CD8-positive, alpha-beta T cell (primary cell): ENCODE measurements at regions of chr10 and their contacts with region 1.

Region 1: DNA sequence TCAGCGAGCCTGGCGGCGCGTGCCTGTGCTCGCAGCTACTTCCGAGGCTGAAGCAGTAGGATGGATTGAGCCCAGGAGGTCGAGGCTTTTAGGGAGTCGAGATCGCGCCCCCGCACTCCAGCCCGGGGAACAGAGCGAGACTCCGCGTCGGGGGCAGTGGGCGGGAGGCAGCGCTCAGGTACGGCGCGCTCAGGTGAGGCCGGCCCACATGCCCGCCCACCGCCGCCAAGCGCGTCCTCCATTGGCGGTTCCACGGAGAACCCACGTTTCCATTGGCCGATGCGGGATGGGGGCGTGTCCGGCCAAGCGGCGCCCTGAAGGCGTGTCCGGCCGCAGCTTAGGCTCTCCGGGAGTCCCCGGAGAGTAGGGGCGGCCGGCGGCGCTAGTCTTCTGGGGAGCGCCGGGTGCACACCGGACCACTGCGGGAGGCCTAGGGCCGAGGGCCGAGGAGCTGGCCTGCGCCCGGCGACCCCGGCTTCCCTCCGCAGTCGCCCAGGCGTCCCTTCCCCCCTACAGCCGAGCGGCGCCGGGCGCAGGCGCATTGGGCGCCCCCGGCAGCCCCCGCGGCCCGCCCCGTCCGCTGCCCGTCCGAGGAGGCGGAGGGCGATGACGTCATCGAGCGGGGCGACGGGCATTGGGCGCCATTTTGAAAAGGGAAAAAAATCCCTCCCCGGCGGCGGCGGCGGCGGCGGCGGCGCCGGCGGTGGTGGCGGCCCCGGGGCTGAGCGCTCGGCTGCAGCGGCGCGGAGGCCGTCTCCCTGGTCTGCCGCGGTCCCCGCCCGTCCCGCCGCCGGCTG is at the start of gene PPP2R2D:
- DNase-seq: peak; percentile 91 to 97 (median 95)
- ATAC-seq: peak; percentile 83
- H3K4me3 ChIP-seq: peak within 1 kb of the TSS; percentile 65 to 76
- H3K4me3 Mint-ChIP-seq: peak within 1 kb of the TSS; percentile 87
- H3K27ac ChIP-seq: peak within 1 kb of the TSS; percentile 73 to 79
- H3K27ac Mint-ChIP-seq: peak within 1 kb of the TSS; percentile 88
- H3K4me1 ChIP-seq: peaks cover 56% of the 10 kb centered on the region
- H3K4me1 Mint-ChIP-seq: peaks cover 52% of the 10 kb centered on the region
- H3K27me3 ChIP-seq: no peaks in the 10 kb centered on the region
- H3K27me3 Mint-ChIP-seq: no peaks in the 10 kb centered on the region
- CTCF ChIP-seq: no peak
- total RNA-seq, gene PPP2R2D: 28.4 to 28.5 TPM

Region 2: GRCh38 chr10:131943021-131943814 is 42.7 kb after region 1 on chr10:
- CTCF ChIA-PET with region 1: interaction called, 3 read pairs
- POLR2A ChIA-PET with region 1: no interaction called
- intact Hi-C with region 1: loop called in 1 of 2 experiments (anchors 5 kb)
- DNase-seq: peak in 4 of 9 experiments; percentile 25 to 43 (median 36)
- ATAC-seq: peak; percentile 59
- H3K4me3 ChIP-seq: no peak overlapping the region
- H3K4me3 Mint-ChIP-seq: no peak overlapping the region
- H3K27ac ChIP-seq: no peak overlapping the region
- H3K27ac Mint-ChIP-seq: peak overlapping the region; percentile 62
- H3K4me1 ChIP-seq: no peaks in the 10 kb centered on the region
- H3K4me1 Mint-ChIP-seq: peaks cover 3% of the 10 kb centered on the region
- H3K27me3 ChIP-seq: no peaks in the 10 kb centered on the region
- H3K27me3 Mint-ChIP-seq: no peaks in the 10 kb centered on the region
- CTCF ChIP-seq: peak; percentile 23

Region 3: DNA sequence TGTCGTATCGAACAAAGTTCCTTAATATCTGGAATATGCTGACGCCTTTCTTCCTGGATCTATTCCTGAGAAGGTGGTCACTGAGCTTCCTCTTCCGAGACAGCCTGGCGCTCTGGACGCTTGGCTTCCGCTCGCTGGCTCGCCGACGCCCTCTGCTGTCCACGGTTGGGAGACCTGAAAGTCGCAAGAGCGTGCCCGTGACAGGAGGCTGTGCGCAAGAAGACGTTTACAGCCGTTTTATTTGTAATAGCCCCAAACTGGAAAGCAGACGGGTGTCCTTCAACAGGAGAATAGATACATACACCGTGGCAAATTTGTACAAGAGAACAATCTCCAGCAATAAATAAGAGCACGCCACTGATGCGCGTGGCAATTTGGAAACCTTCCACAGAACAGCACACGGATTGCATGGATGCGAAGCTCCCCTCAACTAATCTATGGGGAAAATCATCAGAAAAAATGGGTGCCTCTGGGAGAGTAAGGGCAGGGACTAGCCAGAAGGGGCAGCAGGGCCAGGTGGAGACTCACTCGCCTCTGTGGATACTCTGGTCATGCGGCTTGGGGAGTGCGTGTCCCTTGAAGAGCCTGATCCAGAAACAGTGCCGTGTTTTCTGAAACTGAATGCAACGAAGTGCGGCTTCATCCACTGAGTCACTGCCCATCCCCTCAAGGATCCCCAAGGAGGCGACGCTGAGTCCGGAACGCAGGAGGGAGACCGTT is 122.7 kb after region 1 on chr10:
- CTCF ChIA-PET with region 1: interaction called, 27 read pairs
- POLR2A ChIA-PET with region 1: interaction called, 3 read pairs
- intact Hi-C with region 1: no loop called
- DNase-seq: peak; percentile 54 to 88 (median 77)
- ATAC-seq: peak; percentile 94
- H3K4me3 ChIP-seq: no peak overlapping the region
- H3K4me3 Mint-ChIP-seq: peak overlapping the region; percentile 8
- H3K27ac ChIP-seq: no peak overlapping the region
- H3K27ac Mint-ChIP-seq: no peak overlapping the region
- H3K4me1 ChIP-seq: peaks cover 6% of the 10 kb centered on the region
- H3K4me1 Mint-ChIP-seq: peaks cover 7% of the 10 kb centered on the region
- H3K27me3 ChIP-seq: peaks cover 0 to 6% of the 10 kb centered on the region in 2 experiments
- H3K27me3 Mint-ChIP-seq: peaks cover 30% of the 10 kb centered on the region
- CTCF ChIP-seq: peak; percentile 91

Region 4: DNA sequence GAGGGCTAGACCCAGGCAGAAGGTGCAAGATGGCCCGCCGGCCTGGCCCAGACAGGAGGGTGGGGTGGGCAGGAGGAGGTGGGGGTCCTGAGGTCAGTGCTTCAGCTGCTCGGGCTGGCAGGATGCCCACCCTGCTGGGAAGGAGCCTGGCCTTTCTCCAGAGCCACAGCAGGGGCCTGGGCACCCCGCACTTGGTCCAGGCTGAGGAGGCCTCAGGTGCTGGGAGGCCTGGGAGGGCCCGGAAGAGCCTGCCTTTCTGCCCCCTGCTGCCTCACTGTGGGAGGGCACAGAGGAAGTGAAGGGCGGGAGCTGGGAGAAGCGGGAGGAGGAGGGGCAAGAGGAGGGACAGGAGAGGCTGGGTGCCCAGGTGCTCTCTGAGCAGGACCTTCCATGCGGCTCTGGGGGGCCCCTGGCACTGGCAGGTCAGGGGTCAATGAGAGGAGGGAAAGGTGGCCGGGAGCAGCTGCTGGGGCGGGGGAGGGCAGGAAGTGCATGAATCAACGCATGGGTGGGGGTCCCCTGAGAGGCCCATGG is 546.2 kb after region 1 on chr10:
- CTCF ChIA-PET with region 1: no interaction called
- POLR2A ChIA-PET with region 1: no interaction called
- intact Hi-C with region 1: loop called (anchors 5 kb)
- DNase-seq: peak; percentile 31 to 89 (median 73)
- ATAC-seq: peak; percentile 36
- H3K4me3 ChIP-seq: peak overlapping the region; percentile 43 to 53
- H3K4me3 Mint-ChIP-seq: peak overlapping the region; percentile 71
- H3K27ac ChIP-seq: peak overlapping the region; percentile 87 to 99
- H3K27ac Mint-ChIP-seq: peak overlapping the region; percentile 98
- H3K4me1 ChIP-seq: peaks cover 58% of the 10 kb centered on the region
- H3K4me1 Mint-ChIP-seq: peaks cover 52% of the 10 kb centered on the region
- H3K27me3 ChIP-seq: no peaks in the 10 kb centered on the region
- H3K27me3 Mint-ChIP-seq: no peaks in the 10 kb centered on the region
- CTCF ChIP-seq: peak; percentile 30

Region 5: GRCh38 chr10:133394064-133394663 is 1493.6 kb after region 1 on chr10 and contains the start of gene MTG1:
- CTCF ChIA-PET with region 1: no interaction called
- POLR2A ChIA-PET with region 1: no interaction called
- intact Hi-C with region 1: loop called in 1 of 2 experiments (anchors 10 kb)
- DNase-seq: peak; percentile 80 to 96 (median 93)
- ATAC-seq: peak; percentile 68
- H3K4me3 ChIP-seq: peak within 1 kb of the TSS; percentile 69 to 92
- H3K4me3 Mint-ChIP-seq: peak within 1 kb of the TSS; percentile 86
- H3K27ac ChIP-seq: peak within 1 kb of the TSS; percentile 71 to 76
- H3K27ac Mint-ChIP-seq: peak within 1 kb of the TSS; percentile 89
- H3K4me1 ChIP-seq: peaks cover 40% of the 10 kb centered on the region
- H3K4me1 Mint-ChIP-seq: peaks cover 50% of the 10 kb centered on the region
- H3K27me3 ChIP-seq: no peaks in the 10 kb centered on the region
- H3K27me3 Mint-ChIP-seq: no peaks in the 10 kb centered on the region
- CTCF ChIP-seq: no peak
- total RNA-seq, gene MTG1: 30.2 to 31.0 TPM